ENCODE measurements at regions of chr10 and their contacts with region 1.

Region 1: GRCh38 chr10:71326464-71326881 is 7.4 kb downstream of the SLC29A3 start:
- DNase-seq: peak; percentile 49
- H3K4me3 ChIP-seq: no peak overlapping the region
- H3K27ac ChIP-seq: no peak overlapping the region
- H3K4me1 ChIP-seq: no peaks in the 10 kb centered on the region
- H3K27me3 ChIP-seq: no peaks in the 10 kb centered on the region
- CTCF ChIP-seq: no peak

Region 2: GRCh38 chr10:71359364-71360046 is 33.0 kb after region 1 on chr10:
- intact Hi-C with region 1: loop called (anchors 5 kb)
- DNase-seq: no peak
- H3K4me3 ChIP-seq: no peak overlapping the region
- H3K27ac ChIP-seq: no peak overlapping the region
- H3K4me1 ChIP-seq: no peaks in the 10 kb centered on the region
- H3K27me3 ChIP-seq: no peaks in the 10 kb centered on the region
- CTCF ChIP-seq: no peak

Measured in colonic mucosa (tissue), 4 donors.